Heart left ventricle (tissue), 16 donors: ENCODE measurements at regions of chr3 and their contacts with region 1.

Region 1: DNA sequence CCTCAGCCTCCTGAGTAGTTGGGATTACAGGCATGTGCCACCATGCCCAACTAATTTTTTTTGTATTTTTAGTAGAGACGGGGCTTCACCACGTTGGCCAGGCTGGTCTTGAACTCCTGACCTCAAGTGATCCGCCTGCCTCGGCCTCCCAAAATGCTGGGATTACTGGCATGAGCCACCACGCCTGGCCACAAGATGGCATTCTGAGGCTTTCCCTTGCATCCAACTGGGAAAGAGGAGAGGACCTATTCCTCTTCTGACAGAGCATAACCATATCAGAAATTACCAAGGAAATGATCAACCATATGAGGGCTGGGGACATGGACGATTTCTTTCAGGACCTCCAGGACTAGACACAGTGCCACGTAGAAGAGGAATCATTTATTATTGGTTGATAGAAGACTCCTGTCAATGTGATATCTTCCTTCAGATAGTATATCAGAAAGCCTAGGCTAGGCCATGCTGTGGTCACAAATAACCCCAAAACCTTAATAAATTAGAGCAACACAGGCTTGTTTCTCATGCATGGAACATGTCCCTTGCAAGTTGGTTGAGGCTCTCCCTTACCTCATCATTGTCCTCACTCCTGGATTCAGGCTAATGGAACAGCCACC is 372.3 kb upstream of the IL12A start:
- DNase-seq: peak; percentile 32 to 67 (median 47)
- ATAC-seq: peak; percentile 68 to 81 (median 76)
- H3K4me3 ChIP-seq: no peak overlapping the region
- H3K27ac ChIP-seq: no peak overlapping the region
- H3K4me1 ChIP-seq: peaks cover 0 to 11% (median 3%) of the 10 kb centered on the region in 12 donors
- H3K27me3 ChIP-seq: no peaks in the 10 kb centered on the region
- CTCF ChIP-seq: peak; percentile 33 to 76 (median 65)
- POLR2A ChIP-seq: no peak

Region 2: GRCh38 chr3:159664009-159664408 is 47.7 kb after region 1 on chr3:
- intact Hi-C with region 1: no loop called
- DNase-seq: peak in 1 of 5 donors; percentile 14
- ATAC-seq: no peak
- H3K4me3 ChIP-seq: no peak overlapping the region
- H3K27ac ChIP-seq: no peak overlapping the region
- H3K4me1 ChIP-seq: peaks cover 0 to 20% (median 7%) of the 10 kb centered on the region in 12 donors
- H3K27me3 ChIP-seq: no peaks in the 10 kb centered on the region
- CTCF ChIP-seq: no peak
- POLR2A ChIP-seq: no peak

Region 3: DNA sequence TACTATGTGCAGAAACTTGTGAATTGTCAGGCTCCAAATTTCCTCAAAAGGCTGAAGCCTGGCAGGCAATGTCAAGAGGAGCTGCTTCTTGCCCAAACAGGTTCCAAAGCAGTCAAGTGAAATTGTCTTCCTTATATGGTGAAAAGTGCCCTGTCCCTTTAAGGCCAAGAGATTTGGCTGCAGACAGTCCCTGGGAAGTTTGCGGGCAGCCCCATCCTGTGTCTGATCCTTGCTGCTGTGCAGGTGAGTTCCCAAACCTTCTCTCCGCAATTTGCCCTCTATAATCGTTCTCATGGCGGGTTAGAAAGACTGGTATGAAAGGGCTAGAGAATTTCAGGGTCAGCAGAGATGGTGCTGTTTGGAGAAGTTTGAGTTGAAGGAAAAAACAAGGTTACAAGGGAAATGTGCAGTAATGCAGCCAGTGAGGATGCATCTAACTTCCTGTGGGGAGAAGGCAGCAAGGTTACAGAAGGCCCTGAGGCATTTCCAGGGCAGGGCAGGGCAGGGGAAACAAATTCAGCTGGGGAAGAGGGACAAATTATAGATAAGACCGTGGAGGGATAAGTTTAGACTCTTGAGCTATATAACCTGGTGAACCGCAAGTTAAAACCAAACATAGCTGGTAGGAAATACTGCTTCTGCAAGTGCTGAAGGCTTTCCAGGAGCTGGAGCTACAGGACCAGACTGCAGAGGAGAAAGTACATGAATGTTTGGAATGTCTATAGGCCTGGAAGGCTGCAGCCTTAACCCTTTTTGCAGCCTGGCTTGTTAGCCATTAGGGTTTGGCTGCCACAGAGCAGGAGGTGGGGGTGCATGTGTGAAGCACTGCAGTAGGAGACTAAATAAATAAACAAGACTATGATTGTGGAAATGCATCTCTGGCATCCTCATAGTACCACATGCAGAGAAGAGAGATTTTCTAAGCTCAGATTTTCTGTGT is 116.1 kb after region 1 on chr3:
- intact Hi-C with region 1: loop called in 3 of 10 experiments (anchors 2 to 10 kb)
- DNase-seq: peak in 3 of 5 donors; percentile 22 to 34 (median 28)
- ATAC-seq: peak; percentile 74 to 87 (median 82)
- H3K4me3 ChIP-seq: peak overlapping the region in 10 of 12 donors; percentile 14 to 54 (median 38)
- H3K27ac ChIP-seq: peak overlapping the region in 11 of 12 donors; percentile 23 to 75 (median 47)
- H3K4me1 ChIP-seq: peaks cover 0 to 25% (median 7%) of the 10 kb centered on the region in 12 donors
- H3K27me3 ChIP-seq: no peaks in the 10 kb centered on the region
- CTCF ChIP-seq: peak in 3 of 12 donors; percentile 8 to 37 (median 23)
- POLR2A ChIP-seq: no peak